ENCODE measurements at regions of chr18 and their contacts with region 1.

Region 1: GRCh38 chr18:58043491-58044379 is at the start of gene NEDD4L:
- DNase-seq: peak; percentile 92
- ATAC-seq: peak; percentile 87
- H3K4me3 Mint-ChIP-seq: peak within 1 kb of the TSS; percentile 79
- H3K27ac Mint-ChIP-seq: peak within 1 kb of the TSS; percentile 35
- H3K4me1 Mint-ChIP-seq: peaks cover 18% of the 10 kb centered on the region
- H3K27me3 Mint-ChIP-seq: peaks cover 26% of the 10 kb centered on the region
- total RNA-seq, gene NEDD4L: 6.4 to 6.8 TPM

Region 2: DNA sequence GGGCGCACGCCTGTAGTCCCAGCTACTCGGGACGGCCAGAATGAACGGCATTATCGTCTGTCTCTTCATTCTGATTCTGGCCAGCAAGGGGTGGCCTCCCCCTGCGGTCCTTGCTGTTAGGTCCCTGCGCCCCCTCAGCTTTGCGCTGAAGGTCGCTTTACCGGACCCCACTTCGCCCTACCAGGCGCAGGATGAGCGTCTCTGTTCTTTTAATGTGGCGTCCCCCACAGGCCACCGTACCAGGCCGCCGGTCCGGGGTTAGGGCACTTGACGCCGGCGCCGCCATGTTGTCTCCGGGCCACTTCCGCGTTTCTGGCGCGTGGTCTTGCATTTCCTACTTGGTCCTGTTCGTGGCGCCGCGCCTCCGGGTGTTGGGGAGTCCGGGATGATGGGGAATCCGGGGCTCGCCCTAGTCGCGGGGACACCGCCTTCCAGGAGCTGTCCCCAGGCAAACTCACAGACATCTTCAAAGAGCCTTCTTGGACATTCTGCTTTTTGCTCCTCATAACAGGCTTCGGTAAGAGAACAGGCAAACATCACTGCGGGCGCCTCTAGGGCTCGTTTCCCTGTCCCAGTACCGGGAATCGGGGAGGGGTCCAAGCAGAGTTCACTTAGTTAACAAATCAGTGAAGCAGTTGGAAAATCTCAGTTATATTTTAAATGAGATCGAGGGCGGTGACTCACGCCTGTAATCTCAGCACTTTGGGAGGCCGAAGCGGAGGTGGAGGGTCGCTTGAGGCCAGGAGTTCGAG is 413.6 kb before region 1 on chr18:
- CTCF ChIA-PET with region 1: no interaction called
- POLR2A ChIA-PET with region 1: no interaction called
- intact Hi-C with region 1: loop called in 1 of 2 experiments (anchors 10 kb)
- DNase-seq: peak; percentile 97
- ATAC-seq: peak; percentile 99
- H3K4me3 Mint-ChIP-seq: peak overlapping the region; percentile 97
- H3K27ac Mint-ChIP-seq: peak overlapping the region; percentile 96
- H3K4me1 Mint-ChIP-seq: peaks cover 11% of the 10 kb centered on the region
- H3K27me3 Mint-ChIP-seq: no peaks in the 10 kb centered on the region

Region 3: DNA sequence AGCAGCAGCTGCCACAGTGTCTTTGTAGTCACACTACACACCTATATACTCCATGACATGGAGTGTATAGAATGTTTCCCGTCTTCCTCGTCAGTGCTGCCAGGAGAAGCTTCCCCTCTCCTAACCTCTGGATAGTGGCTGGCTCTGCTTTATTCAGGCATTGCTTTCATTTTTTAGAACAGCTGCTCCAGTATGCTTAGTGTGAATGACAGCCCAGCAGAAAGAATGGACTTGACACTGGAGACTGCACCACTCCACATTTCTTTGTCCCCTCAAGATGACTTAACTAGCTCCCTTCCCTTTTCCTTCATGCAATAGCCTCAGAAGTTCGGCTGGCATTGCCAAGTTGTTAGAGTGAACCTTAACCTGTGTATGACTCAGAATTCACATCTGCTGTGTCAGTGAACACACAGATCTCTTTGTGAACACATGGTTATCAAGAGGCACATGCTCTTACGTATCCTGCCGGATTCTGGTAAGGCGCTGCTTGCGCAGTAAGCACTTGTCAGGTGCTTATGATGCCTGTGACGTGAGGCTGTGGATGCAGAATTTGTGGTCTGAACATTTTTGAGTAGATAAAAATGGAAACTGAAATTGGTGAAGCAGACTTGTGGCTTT is 74.2 kb after region 1 on chr18:
- CTCF ChIA-PET with region 1: interaction called, 12 read pairs
- POLR2A ChIA-PET with region 1: no interaction called
- intact Hi-C with region 1: loop called (anchors 1 kb)
- DNase-seq: peak; percentile 65
- ATAC-seq: peak; percentile 86
- H3K4me3 Mint-ChIP-seq: no peak overlapping the region
- H3K27ac Mint-ChIP-seq: no peak overlapping the region
- H3K4me1 Mint-ChIP-seq: peaks cover 5% of the 10 kb centered on the region
- H3K27me3 Mint-ChIP-seq: peaks cover 2% of the 10 kb centered on the region

Region 4: DNA sequence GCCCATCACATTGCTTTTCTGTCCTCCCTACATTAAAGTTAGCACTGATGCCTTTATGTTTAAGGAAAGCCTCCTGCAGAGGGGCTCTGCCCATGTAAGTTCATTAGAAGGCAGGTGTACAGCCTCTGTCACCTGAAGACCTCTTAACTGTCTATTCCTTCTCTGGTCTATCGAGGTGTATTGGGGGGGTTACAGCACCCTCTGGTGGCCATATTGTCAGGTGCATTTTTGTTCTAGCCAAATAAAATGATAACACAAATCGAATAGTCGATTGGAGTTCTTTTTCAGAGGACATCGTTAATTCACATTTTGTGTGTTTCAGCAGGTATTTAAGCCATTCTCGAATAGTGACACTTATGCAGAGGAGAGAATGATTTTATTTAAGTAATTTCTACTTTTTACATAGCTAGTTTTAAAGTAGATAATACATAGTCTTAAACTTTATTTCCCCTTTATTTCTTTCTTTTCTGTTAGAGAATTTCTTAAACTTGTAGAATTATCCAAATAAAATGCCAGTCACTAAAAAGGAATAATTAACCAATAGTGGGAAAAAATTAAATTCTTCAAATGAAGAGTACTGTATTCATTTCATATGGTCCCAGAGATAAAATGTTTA is 137.1 kb after region 1 on chr18:
- CTCF ChIA-PET with region 1: interaction called, 5 read pairs
- POLR2A ChIA-PET with region 1: no interaction called
- intact Hi-C with region 1: loop called in 1 of 2 experiments (anchors 1 kb)
- DNase-seq: peak; percentile 77
- ATAC-seq: no peak
- H3K4me3 Mint-ChIP-seq: no peak overlapping the region
- H3K27ac Mint-ChIP-seq: no peak overlapping the region
- H3K4me1 Mint-ChIP-seq: no peaks in the 10 kb centered on the region
- H3K27me3 Mint-ChIP-seq: no peaks in the 10 kb centered on the region

Region 5: DNA sequence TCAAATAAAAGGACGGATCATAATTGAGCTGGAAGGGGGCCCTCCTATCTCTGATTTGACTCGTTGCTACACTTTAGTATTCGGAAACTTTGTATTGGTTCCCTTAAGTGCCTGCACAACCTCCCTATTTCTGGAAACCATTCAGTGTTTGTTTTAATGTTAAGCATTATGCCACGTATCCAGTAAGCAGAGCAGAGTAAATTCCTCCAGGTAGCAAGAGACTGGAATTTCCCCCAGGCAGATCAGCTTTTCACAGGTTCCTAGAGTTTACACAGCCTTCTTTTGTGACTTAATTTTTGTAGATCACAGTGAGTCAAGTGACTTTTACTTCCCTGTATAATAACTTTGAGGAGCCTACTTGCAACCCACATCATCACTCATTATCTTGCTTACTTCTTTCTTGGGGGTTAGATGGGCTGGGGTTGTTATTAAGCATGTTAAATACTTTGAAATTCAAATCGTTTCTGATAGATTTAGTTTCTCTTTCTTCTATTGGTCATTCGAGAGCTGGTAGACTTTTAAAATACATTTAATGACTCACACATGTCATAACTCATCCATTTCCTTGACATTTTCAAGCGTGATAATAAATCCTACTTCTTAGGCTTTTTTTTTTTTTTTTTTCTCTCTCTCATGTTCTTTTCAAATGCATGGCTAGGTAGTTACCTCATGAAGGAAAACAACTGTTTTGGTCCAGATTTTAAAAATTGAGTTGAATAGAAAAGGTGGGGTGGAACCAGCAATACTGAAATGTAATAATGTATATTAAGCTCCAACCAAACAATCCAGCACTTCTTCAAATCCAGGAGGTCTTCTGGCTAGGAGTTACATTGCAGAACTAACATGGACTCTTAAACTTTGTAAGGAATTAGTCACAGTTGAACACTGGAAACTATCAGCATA is 219.6 kb after region 1 on chr18:
- CTCF ChIA-PET with region 1: no interaction called
- POLR2A ChIA-PET with region 1: no interaction called
- intact Hi-C with region 1: no loop called
- DNase-seq: no peak
- ATAC-seq: peak; percentile 26
- H3K4me3 Mint-ChIP-seq: no peak overlapping the region
- H3K27ac Mint-ChIP-seq: no peak overlapping the region
- H3K4me1 Mint-ChIP-seq: peaks cover 7% of the 10 kb centered on the region
- H3K27me3 Mint-ChIP-seq: no peaks in the 10 kb centered on the region

Region 6: DNA sequence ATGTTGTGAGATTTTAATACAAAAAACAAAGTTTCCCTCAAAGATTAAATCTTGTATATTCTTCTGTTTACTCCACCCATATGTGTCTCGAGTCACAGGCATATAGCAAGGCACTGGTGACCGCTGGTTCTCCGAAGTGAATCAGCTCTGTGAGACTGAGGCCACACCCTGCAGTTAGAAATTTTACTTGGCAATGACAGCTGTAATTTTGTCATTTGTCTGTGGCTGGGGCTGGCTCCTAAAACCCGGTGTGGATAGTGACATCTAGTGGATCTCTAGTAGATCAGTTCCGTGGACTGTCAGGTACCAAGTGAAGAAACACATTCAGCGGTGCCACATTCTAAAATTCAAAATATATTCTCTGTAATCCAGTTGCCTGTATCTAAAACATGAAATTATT is 278.3 kb after region 1 on chr18:
- CTCF ChIA-PET with region 1: interaction called, 5 read pairs
- POLR2A ChIA-PET with region 1: no interaction called
- intact Hi-C with region 1: loop called in 1 of 2 experiments (anchors 1 kb)
- DNase-seq: peak; percentile 75
- ATAC-seq: peak; percentile 99
- H3K4me3 Mint-ChIP-seq: no peak overlapping the region
- H3K27ac Mint-ChIP-seq: peak overlapping the region; percentile 23
- H3K4me1 Mint-ChIP-seq: peaks cover 12% of the 10 kb centered on the region
- H3K27me3 Mint-ChIP-seq: peaks cover 5% of the 10 kb centered on the region

Region 7: GRCh38 chr18:58590839-58591238 is 547.1 kb after region 1 on chr18:
- CTCF ChIA-PET with region 1: no interaction called
- POLR2A ChIA-PET with region 1: no interaction called
- intact Hi-C with region 1: no loop called
- DNase-seq: no peak
- ATAC-seq: no peak
- H3K4me3 Mint-ChIP-seq: no peak overlapping the region
- H3K27ac Mint-ChIP-seq: no peak overlapping the region
- H3K4me1 Mint-ChIP-seq: no peaks in the 10 kb centered on the region
- H3K27me3 Mint-ChIP-seq: no peaks in the 10 kb centered on the region

Region 8: DNA sequence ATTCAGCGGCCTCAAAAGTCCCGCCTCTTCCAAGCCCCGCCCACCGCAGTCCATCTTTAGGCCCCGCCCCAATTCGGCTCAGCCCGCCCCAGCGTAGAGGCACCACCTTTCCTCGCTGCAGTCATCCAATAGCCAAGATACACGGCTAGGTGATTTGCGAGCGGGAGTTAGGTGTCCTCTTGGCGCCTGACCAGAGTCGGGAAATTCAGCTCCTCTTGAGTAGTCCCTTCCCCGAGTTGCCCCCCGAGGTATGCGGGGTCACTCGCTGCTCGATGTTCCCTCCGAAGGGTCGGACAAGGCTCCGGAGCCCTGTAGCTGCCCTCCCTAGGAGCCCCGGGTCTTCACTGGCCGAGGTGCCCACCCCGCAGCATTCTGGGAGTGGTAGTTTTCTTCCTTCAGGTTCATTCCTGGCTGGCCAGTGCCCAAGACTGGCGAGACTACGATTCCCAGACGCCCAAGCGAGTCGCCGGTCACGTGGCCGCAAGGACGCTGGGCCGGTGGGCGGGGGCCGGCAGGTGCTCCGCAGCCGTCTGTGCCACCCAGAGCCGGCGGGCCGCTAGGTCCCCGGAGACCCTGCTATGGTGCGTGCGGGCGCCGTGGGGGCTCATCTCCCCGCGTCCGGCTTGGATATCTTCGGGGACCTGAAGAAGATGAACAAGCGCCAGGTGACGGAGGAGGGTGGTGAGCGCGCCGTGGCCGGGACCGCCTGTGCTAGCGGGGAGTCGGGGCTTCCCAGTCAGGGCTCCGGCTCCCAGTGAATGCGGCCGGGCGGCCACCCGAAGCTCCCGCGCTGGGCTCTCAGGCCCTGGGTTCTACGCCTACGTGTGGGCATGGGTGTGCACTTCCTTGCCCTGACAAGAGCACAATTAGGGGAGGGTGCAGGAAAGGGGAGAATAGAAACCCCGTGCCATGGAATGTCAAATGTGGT is 1095.9 kb after region 1 on chr18 and contains the start of gene SEC11C:
- CTCF ChIA-PET with region 1: no interaction called
- POLR2A ChIA-PET with region 1: no interaction called
- intact Hi-C with region 1: loop called in 1 of 2 experiments (anchors 1 kb)
- DNase-seq: peak; percentile 97
- ATAC-seq: peak; percentile 94
- H3K4me3 Mint-ChIP-seq: peak within 1 kb of the TSS; percentile 94
- H3K27ac Mint-ChIP-seq: peak within 1 kb of the TSS; percentile 95
- H3K4me1 Mint-ChIP-seq: peaks cover 42% of the 10 kb centered on the region
- H3K27me3 Mint-ChIP-seq: peaks cover 8% of the 10 kb centered on the region
- total RNA-seq, gene SEC11C: 53.5 to 70.2 TPM